ENCODE measurements at regions of chrX and their contacts with region 1.

Region 1: DNA sequence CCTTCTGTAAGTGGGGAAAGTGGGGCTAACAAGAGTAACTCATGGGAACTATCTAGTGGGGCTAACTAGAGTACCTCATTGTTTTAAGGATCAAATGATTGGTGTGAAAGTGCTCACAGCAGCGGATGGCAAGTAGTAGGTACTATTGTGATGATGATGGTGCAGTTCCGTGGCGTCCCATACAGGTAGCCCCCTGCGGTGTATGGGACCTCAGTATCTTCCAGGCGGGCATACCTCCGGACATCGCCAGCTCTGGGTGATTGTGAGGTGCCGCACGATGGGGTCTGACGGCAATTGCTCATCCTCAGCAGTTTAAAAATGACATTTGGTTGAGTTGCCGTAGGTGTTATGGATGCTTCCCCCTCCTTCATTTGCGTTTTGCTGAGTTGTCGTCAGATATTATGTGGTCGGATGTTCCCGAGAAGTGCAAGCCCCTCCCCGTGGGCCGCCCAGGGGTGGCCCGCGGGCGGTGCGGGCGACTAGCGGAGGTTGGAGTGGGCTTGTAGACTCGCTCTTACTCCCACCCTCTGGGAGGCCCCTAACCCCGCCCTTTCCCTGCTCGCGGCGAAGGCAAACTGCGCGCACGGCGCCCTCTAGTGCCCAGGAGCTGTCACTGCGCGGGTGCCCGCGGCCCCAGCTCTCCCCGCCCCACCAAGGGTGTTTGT is 18.3 kb upstream of the GPR101 start:
- DNase-seq: peak; percentile 74 to 84 (median 78)
- ATAC-seq: peak; percentile 99
- H3K4me3 ChIP-seq: peak overlapping the region; percentile 27; the same call in 1 of the 2 replicates
- H3K27ac ChIP-seq: no peak overlapping the region
- H3K4me1 ChIP-seq: peaks cover 2 to 10% of the 10 kb centered on the region in 2 experiments; a peak in 2 of 5 replicates
- H3K27me3 ChIP-seq: peaks cover 0 to 28% of the 10 kb centered on the region in 2 experiments; a peak in 3 of 5 replicates
- CTCF ChIP-seq: peak; percentile 83 to 86 (median 84)
- EP300 ChIP-seq: no peak
- POLR2A ChIP-seq: no peak
- RAD21 ChIP-seq: peak; percentile 55 to 77

Region 2: GRCh38 chrX:136608295-136609171 is 443.6 kb before region 1 on chrX:
- CTCF ChIA-PET with region 1: no interaction called
- POLR2A ChIA-PET with region 1: no interaction called
- in situ Hi-C with region 1: no loop called
- intact Hi-C with region 1: loop called (anchors 10 kb)
- DNase-seq: peak in 1 of 4 experiments; percentile 2
- ATAC-seq: no peak
- H3K4me3 ChIP-seq: no peak overlapping the region
- H3K27ac ChIP-seq: no peak overlapping the region
- H3K4me1 ChIP-seq: no peaks in the 10 kb centered on the region
- H3K27me3 ChIP-seq: peaks cover 2 to 5% of the 10 kb centered on the region in 2 experiments; a peak in 1 of 5 replicates
- CTCF ChIP-seq: peak; percentile 18 to 38 (median 31); a peak in 2 of 6 replicates
- EP300 ChIP-seq: no peak
- POLR2A ChIP-seq: no peak
- RAD21 ChIP-seq: peak; percentile 54 to 57

Region 3: GRCh38 chrX:136711147-136711546 is 341.0 kb before region 1 on chrX:
- CTCF ChIA-PET with region 1: no interaction called
- POLR2A ChIA-PET with region 1: no interaction called
- in situ Hi-C with region 1: no loop called
- intact Hi-C with region 1: loop called (anchors 10 kb)
- DNase-seq: peak in 2 of 4 experiments; percentile 7 to 32
- ATAC-seq: peak; percentile 77
- H3K4me3 ChIP-seq: no peak overlapping the region
- H3K27ac ChIP-seq: no peak overlapping the region
- H3K4me1 ChIP-seq: peaks cover 0 to under 1% of the 10 kb centered on the region in 2 experiments; a peak in 2 of 5 replicates
- H3K27me3 ChIP-seq: no peaks in the 10 kb centered on the region
- CTCF ChIP-seq: peak; percentile 41 to 63 (median 46); a peak in 5 of 6 replicates
- EP300 ChIP-seq: no peak
- POLR2A ChIP-seq: no peak
- RAD21 ChIP-seq: peak; percentile 34 to 72; a peak in 3 of 4 replicates

Region 4: GRCh38 chrX:136953867-136954787 is 98.0 kb before region 1 on chrX:
- CTCF ChIA-PET with region 1: interaction called, 15 read pairs
- POLR2A ChIA-PET with region 1: no interaction called
- in situ Hi-C with region 1: loop called (anchors 10 kb)
- intact Hi-C with region 1: loop called (anchors 1 kb)
- DNase-seq: peak; percentile 37 to 83 (median 48)
- ATAC-seq: peak; percentile 99
- H3K4me3 ChIP-seq: no peak overlapping the region
- H3K27ac ChIP-seq: no peak overlapping the region
- H3K4me1 ChIP-seq: no peaks in the 10 kb centered on the region; a peak in 1 of 5 replicates
- H3K27me3 ChIP-seq: no peaks in the 10 kb centered on the region
- CTCF ChIP-seq: peak; percentile 68 to 80 (median 79)
- EP300 ChIP-seq: no peak
- POLR2A ChIP-seq: no peak
- RAD21 ChIP-seq: peak; percentile 28 to 46; a peak in 2 of 4 replicates

Region 5: DNA sequence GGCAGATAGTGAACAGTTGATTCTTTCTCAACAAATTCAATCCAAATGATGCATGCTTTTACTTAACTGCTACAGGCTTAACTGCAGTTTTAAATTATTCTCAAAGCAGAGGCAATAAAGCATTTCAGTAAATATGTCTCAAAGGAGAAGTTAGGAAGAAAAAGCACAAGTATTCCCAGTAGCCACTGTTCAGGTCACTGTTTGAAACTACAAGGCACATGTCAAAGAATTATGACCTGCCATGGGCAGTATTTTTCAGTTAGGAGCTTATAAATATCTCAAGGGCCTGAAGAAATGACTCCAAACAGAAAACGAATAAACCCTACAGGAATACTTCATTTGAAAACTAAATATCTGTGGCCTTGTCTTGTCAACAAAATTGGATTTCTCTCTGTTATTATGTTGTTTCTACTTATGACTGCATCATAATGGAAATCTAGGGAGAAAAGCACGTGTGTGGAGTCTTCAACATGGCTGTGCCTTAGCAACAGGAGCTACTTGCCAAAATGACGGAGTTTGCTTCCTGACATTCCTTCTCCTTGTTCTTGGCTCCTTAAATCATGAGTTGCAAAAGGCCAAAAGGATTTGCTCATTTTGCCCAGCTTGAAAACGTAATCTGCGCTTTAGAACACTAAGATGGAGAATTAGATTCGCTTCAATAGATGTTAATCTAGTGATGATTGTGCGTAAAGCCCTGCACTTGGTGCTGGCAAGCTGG is 49.3 kb after region 1 on chrX:
- CTCF ChIA-PET with region 1: no interaction called
- POLR2A ChIA-PET with region 1: no interaction called
- in situ Hi-C with region 1: no loop called
- intact Hi-C with region 1: no loop called
- DNase-seq: no peak
- ATAC-seq: no peak
- H3K4me3 ChIP-seq: no peak overlapping the region
- H3K27ac ChIP-seq: no peak overlapping the region
- H3K4me1 ChIP-seq: no peaks in the 10 kb centered on the region
- H3K27me3 ChIP-seq: no peaks in the 10 kb centered on the region; a peak in 1 of 5 replicates
- CTCF ChIP-seq: no peak
- EP300 ChIP-seq: no peak
- POLR2A ChIP-seq: no peak
- RAD21 ChIP-seq: no peak

Region 6: GRCh38 chrX:137194164-137194563 is 142.1 kb after region 1 on chrX:
- CTCF ChIA-PET with region 1: no interaction called
- POLR2A ChIA-PET with region 1: no interaction called
- in situ Hi-C with region 1: no loop called
- intact Hi-C with region 1: loop called (anchors 10 kb)
- DNase-seq: peak; percentile 5 to 47 (median 22)
- ATAC-seq: peak; percentile 85
- H3K4me3 ChIP-seq: no peak overlapping the region
- H3K27ac ChIP-seq: no peak overlapping the region
- H3K4me1 ChIP-seq: no peaks in the 10 kb centered on the region
- H3K27me3 ChIP-seq: no peaks in the 10 kb centered on the region
- CTCF ChIP-seq: peak; percentile 65 to 71 (median 69)
- EP300 ChIP-seq: no peak
- POLR2A ChIP-seq: no peak
- RAD21 ChIP-seq: peak; percentile 49 to 64

Region 7: DNA sequence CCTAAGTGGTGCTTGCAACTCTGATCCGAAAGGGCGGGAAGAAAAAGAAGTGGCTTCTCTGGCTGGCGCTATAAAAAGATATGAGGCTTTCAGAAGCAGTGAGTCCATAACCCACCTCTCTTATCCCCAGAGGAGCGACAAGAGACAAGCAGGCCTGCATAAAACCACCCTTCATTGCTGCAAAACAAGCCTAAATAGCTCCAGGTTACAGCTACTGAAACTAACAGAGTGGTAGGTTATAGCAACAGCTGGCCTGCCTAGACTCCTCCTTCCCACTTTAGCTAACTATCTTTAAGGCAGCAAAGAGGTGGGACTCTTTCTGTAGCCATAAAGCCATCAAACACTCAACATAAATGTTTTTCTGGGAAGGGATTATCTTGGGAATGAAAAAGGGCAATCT is 226.7 kb after region 1 on chrX:
- CTCF ChIA-PET with region 1: no interaction called
- POLR2A ChIA-PET with region 1: no interaction called
- in situ Hi-C with region 1: no loop called
- intact Hi-C with region 1: no loop called
- DNase-seq: no peak
- ATAC-seq: no peak
- H3K4me3 ChIP-seq: no peak overlapping the region
- H3K27ac ChIP-seq: no peak overlapping the region
- H3K4me1 ChIP-seq: no peaks in the 10 kb centered on the region
- H3K27me3 ChIP-seq: no peaks in the 10 kb centered on the region
- CTCF ChIP-seq: no peak
- EP300 ChIP-seq: no peak
- POLR2A ChIP-seq: no peak
- RAD21 ChIP-seq: no peak